Kidney (tissue), 22 donors: ENCODE measurements at regions of chr19 and their contacts with region 1.

Region 1: GRCh38 chr19:9785367-9786331 is 17.1 kb upstream of the ZNF846 start:
- DNase-seq: peak; percentile 99 to 100 (median 99)
- H3K4me3 ChIP-seq: peak overlapping the region; percentile 68 to 85 (median 72)
- H3K27ac ChIP-seq: peak overlapping the region; percentile 98
- H3K4me1 ChIP-seq: peaks cover 0 to 5% (median 3%) of the 10 kb centered on the region in 3 donors
- H3K27me3 ChIP-seq: no peaks in the 10 kb centered on the region
- CTCF ChIP-seq: no peak

Region 2: DNA sequence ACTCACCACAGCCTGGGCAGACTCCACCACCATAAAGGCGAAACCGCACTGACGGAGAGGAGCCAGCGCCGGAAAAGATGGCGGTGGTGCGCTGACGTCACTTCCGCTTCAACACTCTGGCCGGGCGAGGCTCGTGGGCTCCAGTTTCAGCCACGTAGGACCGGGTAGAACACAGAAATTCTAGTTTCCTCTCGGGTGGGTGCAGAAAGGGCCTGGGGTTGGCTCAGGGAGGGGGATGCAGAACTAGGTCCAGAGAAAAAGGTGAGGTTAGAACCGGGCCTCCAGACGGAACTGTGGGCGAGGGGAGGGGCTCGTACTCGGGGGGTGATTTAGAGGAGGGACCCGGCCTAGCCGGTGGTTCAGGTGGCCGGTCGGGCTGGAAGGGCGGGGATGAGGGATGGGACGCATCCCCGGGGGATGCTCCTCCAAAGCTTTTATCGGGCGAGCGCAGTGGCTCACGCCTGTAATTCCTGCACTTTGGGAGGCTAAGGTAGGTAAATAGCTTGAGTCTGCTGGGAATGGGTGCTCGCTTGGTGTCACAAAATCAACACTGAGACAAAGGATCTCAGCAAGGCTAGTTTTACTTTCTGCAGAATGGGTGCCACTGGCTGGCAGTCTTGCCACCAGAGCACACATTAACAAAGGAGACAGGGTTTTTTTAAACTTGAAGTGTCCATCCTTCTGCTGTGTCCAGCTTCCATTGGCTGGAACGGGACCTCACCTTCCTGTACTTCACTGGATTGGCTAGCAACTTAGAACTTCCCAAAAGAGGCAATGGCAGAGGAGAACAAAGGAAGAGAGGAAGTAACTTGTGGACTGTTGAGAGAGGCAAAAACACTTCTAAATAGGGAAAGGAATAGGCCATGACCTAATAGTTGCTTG is 164.3 kb before region 1 on chr19 and contains the start of gene ZNF561:
- intact Hi-C with region 1: loop called (anchors 10 kb)
- DNase-seq: peak; percentile 92 to 95 (median 94)
- H3K4me3 ChIP-seq: peak within 1 kb of the TSS; percentile 91 to 100 (median 98)
- H3K27ac ChIP-seq: peak within 1 kb of the TSS; percentile 91 to 98
- H3K4me1 ChIP-seq: peaks cover 3 to 13% (median 9%) of the 10 kb centered on the region in 3 donors
- H3K27me3 ChIP-seq: no peaks in the 10 kb centered on the region
- CTCF ChIP-seq: no peak
- total RNA-seq, gene ZNF561: 35.5 TPM